ENCODE measurements at regions of chr19 and their contacts with region 1.

Region 1: GRCh38 chr19:41263850-41264580 is at the start of gene HNRNPUL1:
- DNase-seq: peak; percentile 100
- ATAC-seq: peak; percentile 75
- H3K4me3 ChIP-seq: peak within 1 kb of the TSS; percentile 95
- H3K27ac ChIP-seq: peak within 1 kb of the TSS; percentile 100
- H3K4me1 ChIP-seq: no peaks in the 10 kb centered on the region
- H3K27me3 ChIP-seq: no peaks in the 10 kb centered on the region
- CTCF ChIP-seq: peak; percentile 20 to 26 (median 24); a peak in 2 of 6 replicates
- EP300 ChIP-seq: peak in 1 of 2 experiments; percentile 47; a peak in 1 of 4 replicates
- POLR2A ChIP-seq: 0 out of 2 replicates have a peak, but pooled peaks have one; percentile 2
- RAD21 ChIP-seq: no peak
- polyA plus RNA-seq, gene HNRNPUL1: 11.1 to 26.3 TPM

Region 2: DNA sequence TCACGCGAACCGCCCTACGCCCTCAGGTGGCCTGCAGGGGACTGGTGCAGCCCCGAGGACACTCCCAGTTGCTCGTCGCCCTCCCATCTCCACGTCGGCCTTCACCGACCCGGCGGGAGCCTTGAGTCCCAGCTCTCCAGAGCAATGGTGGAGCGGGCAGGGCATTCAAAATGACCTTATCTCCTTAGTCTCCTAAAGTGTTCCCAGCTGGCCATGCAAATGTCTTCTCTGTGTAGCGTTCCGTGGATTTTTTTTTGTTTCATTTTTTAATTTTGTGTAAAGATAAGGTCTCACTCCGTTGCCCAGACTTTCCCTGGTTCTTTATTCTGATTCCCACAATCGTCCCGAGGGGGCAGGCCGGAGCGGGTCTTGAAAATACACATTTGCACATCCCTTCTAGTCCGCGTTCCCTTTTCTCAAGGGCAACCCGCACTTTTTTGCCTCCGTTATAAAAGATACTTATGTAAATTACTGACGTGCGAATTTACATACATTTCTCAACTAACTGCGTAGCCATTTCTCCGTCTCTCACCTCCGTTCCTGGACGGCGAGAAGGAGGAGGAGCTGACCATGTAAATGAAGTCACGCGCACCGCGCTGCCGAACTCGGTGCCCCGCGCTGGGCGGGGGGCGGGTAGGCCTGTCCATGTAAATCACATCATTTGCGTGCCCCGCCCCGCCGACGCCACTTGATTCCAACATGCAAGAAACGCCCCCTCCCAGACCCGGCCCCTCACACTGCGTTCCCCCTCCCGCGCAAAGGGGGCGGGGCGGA is 465.6 kb before region 1 on chr19:
- CTCF ChIA-PET with region 1: no interaction called
- POLR2A ChIA-PET with region 1: no interaction called
- RAD21 ChIA-PET with region 1: no interaction called
- SMC1A ChIA-PET with region 1: no interaction called
- in situ Hi-C with region 1: no loop called
- intact Hi-C with region 1: loop called (anchors 2 kb)
- DNase-seq: peak; percentile 97
- ATAC-seq: peak; percentile 91
- H3K4me3 ChIP-seq: peak overlapping the region; percentile 66
- H3K27ac ChIP-seq: peak overlapping the region; percentile 68
- H3K4me1 ChIP-seq: peaks cover 38% of the 10 kb centered on the region
- H3K27me3 ChIP-seq: no peaks in the 10 kb centered on the region
- CTCF ChIP-seq: peak; percentile 46 to 53 (median 48); a peak in 5 of 6 replicates
- EP300 ChIP-seq: 0 out of 4 replicates have a peak, but pooled peaks of 1 of the 2 experiments have one; percentile 31
- POLR2A ChIP-seq: peak; percentile 67
- RAD21 ChIP-seq: peak; percentile 42; the same call in 1 of the 2 replicates

Region 3: GRCh38 chr19:41192574-41193429 is 71.2 kb before region 1 on chr19 and contains the start of gene CYP2S1:
- CTCF ChIA-PET with region 1: no interaction called
- POLR2A ChIA-PET with region 1: no interaction called
- RAD21 ChIA-PET with region 1: no interaction called
- SMC1A ChIA-PET with region 1: no interaction called
- in situ Hi-C with region 1: no loop called
- intact Hi-C with region 1: no loop called
- DNase-seq: no peak
- ATAC-seq: no peak
- H3K4me3 ChIP-seq: no peak within 1 kb of the TSS
- H3K27ac ChIP-seq: no peak within 1 kb of the TSS
- H3K4me1 ChIP-seq: no peaks in the 10 kb centered on the region; the same call in 1 of the 2 replicates
- H3K27me3 ChIP-seq: peaks cover 2 to 15% of the 10 kb centered on the region in 2 experiments; a peak in 3 of 4 replicates
- CTCF ChIP-seq: no peak
- EP300 ChIP-seq: no peak
- POLR2A ChIP-seq: no peak
- RAD21 ChIP-seq: no peak
- polyA plus RNA-seq, gene CYP2S1: 0.04 to 0.08 TPM

Region 4: GRCh38 chr19:41206926-41207750 is 56.9 kb before region 1 on chr19:
- CTCF ChIA-PET with region 1: interaction called, 90 read pairs
- POLR2A ChIA-PET with region 1: interaction called, 5 read pairs
- RAD21 ChIA-PET with region 1: interaction called, 26 read pairs
- SMC1A ChIA-PET with region 1: interaction called, 32 read pairs
- in situ Hi-C with region 1: loop called (anchors 5 kb)
- intact Hi-C with region 1: loop called (anchors 1 kb)
- DNase-seq: no peak
- ATAC-seq: no peak
- H3K4me3 ChIP-seq: no peak overlapping the region
- H3K27ac ChIP-seq: no peak overlapping the region
- H3K4me1 ChIP-seq: no peaks in the 10 kb centered on the region
- H3K27me3 ChIP-seq: no peaks in the 10 kb centered on the region
- CTCF ChIP-seq: no peak
- EP300 ChIP-seq: no peak
- POLR2A ChIP-seq: no peak
- RAD21 ChIP-seq: no peak

Region 5: GRCh38 chr19:41239363-41239762 is 24.7 kb before region 1 on chr19:
- CTCF ChIA-PET with region 1: no interaction called
- POLR2A ChIA-PET with region 1: no interaction called
- RAD21 ChIA-PET with region 1: no interaction called
- SMC1A ChIA-PET with region 1: no interaction called
- in situ Hi-C with region 1: no loop called
- intact Hi-C with region 1: no loop called
- DNase-seq: no peak
- ATAC-seq: no peak
- H3K4me3 ChIP-seq: no peak overlapping the region
- H3K27ac ChIP-seq: no peak overlapping the region
- H3K4me1 ChIP-seq: no peaks in the 10 kb centered on the region
- H3K27me3 ChIP-seq: no peaks in the 10 kb centered on the region
- CTCF ChIP-seq: no peak
- EP300 ChIP-seq: no peak
- POLR2A ChIP-seq: no peak
- RAD21 ChIP-seq: no peak

Region 6: DNA sequence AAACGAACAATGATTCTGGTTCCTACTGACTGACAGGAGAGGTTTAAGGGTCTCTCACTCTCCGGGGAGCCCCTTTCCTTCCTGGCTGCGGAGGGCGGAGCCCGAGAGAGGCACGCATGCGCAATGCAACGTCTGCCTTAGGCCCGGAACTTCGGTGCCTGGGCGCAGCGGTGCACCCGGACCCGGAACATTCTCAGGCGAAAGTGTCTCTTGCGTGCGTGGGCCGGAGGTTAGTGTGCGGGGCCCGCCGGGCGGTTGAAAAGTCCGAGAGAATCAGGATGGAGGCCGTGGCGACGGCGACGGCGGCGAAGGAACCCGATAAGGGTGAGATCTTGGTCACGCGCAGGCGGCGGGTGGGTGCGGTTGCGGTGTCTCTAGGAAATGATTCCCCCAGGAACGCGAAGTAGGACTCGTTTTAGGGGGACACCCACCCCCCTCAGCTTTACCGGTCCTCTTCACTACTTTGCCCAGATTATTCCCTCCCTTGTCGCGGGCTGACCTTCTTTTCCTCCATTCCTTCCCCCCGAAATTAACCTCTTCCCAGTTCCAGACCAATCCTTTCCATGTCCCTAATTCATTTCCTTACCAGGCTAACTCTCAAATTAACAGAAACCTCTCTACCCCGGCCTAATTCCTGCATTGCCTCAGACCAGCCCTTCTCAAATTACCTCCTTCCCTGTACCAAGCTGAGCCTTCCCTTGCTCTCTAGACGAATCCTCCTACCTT is 46.2 kb after region 1 on chr19 and contains the start of gene CCDC97:
- CTCF ChIA-PET with region 1: interaction called, 84 read pairs
- POLR2A ChIA-PET with region 1: interaction called, 13 read pairs
- RAD21 ChIA-PET with region 1: interaction called, 42 read pairs
- SMC1A ChIA-PET with region 1: interaction called, 34 read pairs
- in situ Hi-C with region 1: no loop called
- intact Hi-C with region 1: loop called (anchors 1 kb)
- DNase-seq: peak; percentile 68
- ATAC-seq: peak; percentile 81
- H3K4me3 ChIP-seq: peak within 1 kb of the TSS; percentile 98
- H3K27ac ChIP-seq: peak within 1 kb of the TSS; percentile 97
- H3K4me1 ChIP-seq: peaks cover 35% of the 10 kb centered on the region
- H3K27me3 ChIP-seq: no peaks in the 10 kb centered on the region
- CTCF ChIP-seq: no peak
- EP300 ChIP-seq: peak in 1 of 2 experiments; percentile 46; a peak in 1 of 4 replicates
- POLR2A ChIP-seq: peak; percentile 93
- RAD21 ChIP-seq: no peak
- polyA plus RNA-seq, gene CCDC97: 1.8 to 2.4 TPM

Region 7: GRCh38 chr19:41363753-41364523 is 99.9 kb after region 1 on chr19 and contains the start of gene B9D2:
- CTCF ChIA-PET with region 1: interaction called, 3 read pairs
- POLR2A ChIA-PET with region 1: interaction called, 14 read pairs
- RAD21 ChIA-PET with region 1: interaction called, 18 read pairs
- SMC1A ChIA-PET with region 1: interaction called, 8 read pairs
- in situ Hi-C with region 1: no loop called
- intact Hi-C with region 1: no loop called
- DNase-seq: peak; percentile 94
- ATAC-seq: peak; percentile 93
- H3K4me3 ChIP-seq: peak within 1 kb of the TSS; percentile 92
- H3K27ac ChIP-seq: peak within 1 kb of the TSS; percentile 94
- H3K4me1 ChIP-seq: peaks cover 28% of the 10 kb centered on the region
- H3K27me3 ChIP-seq: no peaks in the 10 kb centered on the region
- CTCF ChIP-seq: no peak
- EP300 ChIP-seq: no peak
- POLR2A ChIP-seq: peak; percentile 93
- RAD21 ChIP-seq: no peak
- polyA plus RNA-seq, gene B9D2: 2.5 to 5.0 TPM